Naive thymus-derived CD4-positive, alpha-beta T cell (primary cell): ENCODE measurements at regions of chr6 and their contacts with region 1.

Region 1: GRCh38 chr6:26122793-26123674 is 35.8 kb downstream of the HFE start:
- DNase-seq: peak; percentile 68 to 99 (median 96)
- ATAC-seq: peak; percentile 78
- H3K4me3 ChIP-seq: peak overlapping the region; percentile 94
- H3K4me3 Mint-ChIP-seq: peak overlapping the region; percentile 92 to 100 (median 98)
- H3K27ac ChIP-seq: peak overlapping the region; percentile 86
- H3K27ac Mint-ChIP-seq: peak overlapping the region; percentile 97 to 100 (median 99)
- H3K4me1 ChIP-seq: peaks cover 18 to 23% of the 10 kb centered on the region in 2 donors
- H3K4me1 Mint-ChIP-seq: peaks cover 22 to 54% (median 30%) of the 10 kb centered on the region in 7 donors
- H3K27me3 ChIP-seq: no peaks in the 10 kb centered on the region
- H3K27me3 Mint-ChIP-seq: peaks cover 0 to 21% (median 0%) of the 10 kb centered on the region in 5 donors

Region 2: GRCh38 chr6:26045065-26045927 is 77.7 kb before region 1 on chr6:
- CTCF ChIA-PET with region 1: interaction called, 5 read pairs
- POLR2A ChIA-PET with region 1: interaction called, 260 read pairs
- intact Hi-C with region 1: loop called (anchors 1 kb)
- DNase-seq: peak; percentile 39 to 93 (median 89)
- ATAC-seq: peak; percentile 68
- H3K4me3 ChIP-seq: peak overlapping the region; percentile 91
- H3K4me3 Mint-ChIP-seq: peak overlapping the region; percentile 87 to 98 (median 94)
- H3K27ac ChIP-seq: peak overlapping the region; percentile 90
- H3K27ac Mint-ChIP-seq: peak overlapping the region; percentile 80 to 98 (median 95)
- H3K4me1 ChIP-seq: peaks cover 7 to 19% of the 10 kb centered on the region in 2 donors
- H3K4me1 Mint-ChIP-seq: peaks cover 8 to 51% (median 20%) of the 10 kb centered on the region in 7 donors
- H3K27me3 ChIP-seq: no peaks in the 10 kb centered on the region
- H3K27me3 Mint-ChIP-seq: peaks cover 0 to 3% (median 0%) of the 10 kb centered on the region in 5 donors

Region 3: DNA sequence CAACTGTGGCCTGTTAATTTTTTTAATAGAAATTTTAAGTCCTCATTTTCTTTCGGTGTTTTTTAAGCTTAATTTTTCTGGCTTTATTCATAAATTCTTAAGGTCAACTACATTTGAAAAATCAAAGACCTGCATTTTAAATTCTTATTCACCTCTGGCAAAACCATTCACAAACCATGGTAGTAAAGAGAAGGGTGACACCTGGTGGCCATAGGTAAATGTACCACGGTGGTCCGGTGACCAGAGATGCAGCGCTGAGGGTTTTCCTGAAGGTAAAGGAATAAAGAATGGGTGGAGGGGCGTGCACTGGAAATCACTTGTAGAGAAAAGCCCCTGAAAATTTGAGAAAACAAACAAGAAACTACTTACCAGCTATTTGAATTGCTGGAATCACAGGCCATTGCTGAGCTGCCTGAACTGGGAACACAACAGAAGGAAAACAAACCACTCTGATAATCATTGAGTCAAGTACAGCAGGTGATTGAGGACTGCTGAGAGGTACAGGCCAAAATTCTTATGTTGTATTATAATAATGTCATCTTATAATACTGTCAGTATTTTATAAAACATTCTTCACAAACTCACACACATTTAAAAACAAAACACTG is 25.7 kb before region 1 on chr6:
- CTCF ChIA-PET with region 1: interaction called, 5 read pairs
- POLR2A ChIA-PET with region 1: interaction called, 324 read pairs
- intact Hi-C with region 1: no loop called
- DNase-seq: peak; percentile 23 to 75 (median 61)
- ATAC-seq: peak; percentile 92
- H3K4me3 ChIP-seq: no peak overlapping the region
- H3K4me3 Mint-ChIP-seq: no peak overlapping the region
- H3K27ac ChIP-seq: no peak overlapping the region
- H3K27ac Mint-ChIP-seq: no peak overlapping the region
- H3K4me1 ChIP-seq: no peaks in the 10 kb centered on the region
- H3K4me1 Mint-ChIP-seq: peaks cover 4 to 13% (median 8%) of the 10 kb centered on the region in 7 donors
- H3K27me3 ChIP-seq: no peaks in the 10 kb centered on the region
- H3K27me3 Mint-ChIP-seq: peaks cover 0 to 9% (median 0%) of the 10 kb centered on the region in 5 donors

Region 4: DNA sequence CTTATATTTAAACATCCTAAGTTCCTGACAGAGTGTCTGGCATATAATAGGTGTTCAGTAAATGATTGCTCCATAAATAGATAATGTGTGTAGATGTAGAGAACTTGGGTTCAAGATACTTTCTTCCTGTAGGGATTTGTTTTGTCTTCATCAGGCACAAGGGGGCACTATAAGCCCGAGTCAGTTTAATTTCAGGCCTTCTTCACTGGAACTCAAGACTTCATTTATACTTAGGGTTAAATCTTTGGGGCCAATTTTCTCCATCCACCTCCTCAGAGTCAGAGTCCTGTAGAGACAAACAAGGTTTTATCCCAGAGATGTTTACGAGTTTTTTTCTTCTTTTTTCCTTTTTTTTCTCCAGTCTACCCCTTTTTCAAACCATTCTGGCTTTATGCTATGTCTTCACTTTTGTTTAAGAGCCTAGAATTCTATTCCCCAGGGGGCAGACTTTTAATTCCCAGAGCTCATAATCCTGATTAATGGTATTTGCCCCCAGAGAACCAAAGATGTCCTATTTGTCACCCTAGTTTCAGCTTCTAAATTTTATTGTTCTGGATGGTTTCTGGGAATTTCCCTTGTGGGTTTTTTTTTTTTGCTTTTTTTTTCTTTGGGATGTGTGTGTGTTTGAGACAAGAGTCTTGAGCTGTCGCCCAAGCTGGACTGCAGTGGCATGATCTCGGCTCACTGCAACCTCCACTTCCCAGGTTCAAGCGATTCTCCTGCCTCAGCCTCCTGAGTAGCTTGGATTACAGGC is 52.6 kb after region 1 on chr6:
- CTCF ChIA-PET with region 1: interaction called, 3 read pairs
- POLR2A ChIA-PET with region 1: interaction called, 2,532 read pairs
- intact Hi-C with region 1: loop called (anchors 1 kb)
- DNase-seq: peak in 7 of 9 donors; percentile 57 to 75 (median 66)
- ATAC-seq: peak; percentile 32
- H3K4me3 ChIP-seq: no peak overlapping the region
- H3K4me3 Mint-ChIP-seq: peak overlapping the region in 7 of 10 donors; percentile 15 to 63 (median 43)
- H3K27ac ChIP-seq: no peak overlapping the region
- H3K27ac Mint-ChIP-seq: peak overlapping the region; percentile 32 to 89 (median 76)
- H3K4me1 ChIP-seq: peaks cover 16 to 19% of the 10 kb centered on the region in 2 donors
- H3K4me1 Mint-ChIP-seq: peaks cover 20 to 51% (median 39%) of the 10 kb centered on the region in 7 donors
- H3K27me3 ChIP-seq: no peaks in the 10 kb centered on the region
- H3K27me3 Mint-ChIP-seq: no peaks in the 10 kb centered on the region

Region 5: DNA sequence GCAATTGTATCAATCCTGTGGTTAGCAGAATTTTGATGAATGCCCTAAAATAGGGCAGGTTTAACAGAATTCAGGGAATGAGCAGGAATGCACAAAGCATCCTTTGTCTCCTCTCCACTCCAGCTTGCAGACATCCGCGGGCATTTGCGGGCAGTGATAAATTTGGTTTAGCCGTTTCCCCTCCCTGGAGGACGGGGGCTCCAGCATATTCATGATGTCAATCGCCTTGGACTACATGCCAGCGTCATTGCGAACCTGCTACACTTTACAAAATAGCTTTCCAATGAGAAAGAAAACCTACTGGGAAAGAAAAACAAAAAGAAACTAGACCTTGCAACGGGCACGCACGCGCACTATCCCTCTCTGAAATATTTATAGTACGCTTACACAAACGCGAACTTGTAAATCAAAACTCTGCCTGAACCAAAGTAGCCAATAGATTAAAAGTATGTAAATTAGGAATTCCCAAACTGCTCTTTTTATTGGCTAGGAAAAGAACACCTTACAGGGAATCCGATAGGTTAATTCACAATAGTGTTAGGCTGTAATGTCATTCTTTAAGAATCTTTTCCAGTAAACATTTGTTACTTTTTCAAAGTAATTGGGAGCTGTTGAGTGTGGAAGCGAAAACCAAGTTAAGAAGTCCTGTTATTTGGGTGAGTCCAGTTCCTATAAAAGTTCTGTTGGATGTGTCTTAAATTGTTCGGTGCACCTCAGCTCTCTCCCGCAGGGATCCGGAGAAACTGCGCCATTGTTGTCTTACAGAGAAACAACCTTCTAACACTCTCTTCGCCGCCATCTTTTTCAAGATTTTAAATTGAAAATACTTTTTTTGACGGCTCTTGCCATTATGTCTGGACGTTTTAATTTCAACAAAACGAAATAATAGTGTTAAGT is 100.9 kb after region 1 on chr6:
- CTCF ChIA-PET with region 1: no interaction called
- POLR2A ChIA-PET with region 1: interaction called, 215 read pairs
- intact Hi-C with region 1: no loop called
- DNase-seq: peak in 7 of 9 donors; percentile 79 to 89 (median 84)
- ATAC-seq: peak; percentile 93
- H3K4me3 ChIP-seq: peak overlapping the region; percentile 77
- H3K4me3 Mint-ChIP-seq: no peak overlapping the region
- H3K27ac ChIP-seq: peak overlapping the region; percentile 77
- H3K27ac Mint-ChIP-seq: no peak overlapping the region
- H3K4me1 ChIP-seq: peaks cover 14 to 18% of the 10 kb centered on the region in 2 donors
- H3K4me1 Mint-ChIP-seq: peaks cover 10 to 25% (median 18%) of the 10 kb centered on the region in 7 donors
- H3K27me3 ChIP-seq: no peaks in the 10 kb centered on the region
- H3K27me3 Mint-ChIP-seq: no peaks in the 10 kb centered on the region

Region 6: GRCh38 chr6:27370391-27370790 is 1247.4 kb after region 1 on chr6:
- CTCF ChIA-PET with region 1: no interaction called
- POLR2A ChIA-PET with region 1: no interaction called
- intact Hi-C with region 1: no loop called
- DNase-seq: no peak
- ATAC-seq: no peak
- H3K4me3 ChIP-seq: no peak overlapping the region
- H3K4me3 Mint-ChIP-seq: no peak overlapping the region
- H3K27ac ChIP-seq: no peak overlapping the region
- H3K27ac Mint-ChIP-seq: no peak overlapping the region
- H3K4me1 ChIP-seq: peaks cover 10% of the 10 kb centered on the region in 2 donors
- H3K4me1 Mint-ChIP-seq: peaks cover 12 to 41% (median 21%) of the 10 kb centered on the region in 7 donors
- H3K27me3 ChIP-seq: no peaks in the 10 kb centered on the region
- H3K27me3 Mint-ChIP-seq: peaks cover 0 to 6% (median 0%) of the 10 kb centered on the region in 5 donors

Region 7: DNA sequence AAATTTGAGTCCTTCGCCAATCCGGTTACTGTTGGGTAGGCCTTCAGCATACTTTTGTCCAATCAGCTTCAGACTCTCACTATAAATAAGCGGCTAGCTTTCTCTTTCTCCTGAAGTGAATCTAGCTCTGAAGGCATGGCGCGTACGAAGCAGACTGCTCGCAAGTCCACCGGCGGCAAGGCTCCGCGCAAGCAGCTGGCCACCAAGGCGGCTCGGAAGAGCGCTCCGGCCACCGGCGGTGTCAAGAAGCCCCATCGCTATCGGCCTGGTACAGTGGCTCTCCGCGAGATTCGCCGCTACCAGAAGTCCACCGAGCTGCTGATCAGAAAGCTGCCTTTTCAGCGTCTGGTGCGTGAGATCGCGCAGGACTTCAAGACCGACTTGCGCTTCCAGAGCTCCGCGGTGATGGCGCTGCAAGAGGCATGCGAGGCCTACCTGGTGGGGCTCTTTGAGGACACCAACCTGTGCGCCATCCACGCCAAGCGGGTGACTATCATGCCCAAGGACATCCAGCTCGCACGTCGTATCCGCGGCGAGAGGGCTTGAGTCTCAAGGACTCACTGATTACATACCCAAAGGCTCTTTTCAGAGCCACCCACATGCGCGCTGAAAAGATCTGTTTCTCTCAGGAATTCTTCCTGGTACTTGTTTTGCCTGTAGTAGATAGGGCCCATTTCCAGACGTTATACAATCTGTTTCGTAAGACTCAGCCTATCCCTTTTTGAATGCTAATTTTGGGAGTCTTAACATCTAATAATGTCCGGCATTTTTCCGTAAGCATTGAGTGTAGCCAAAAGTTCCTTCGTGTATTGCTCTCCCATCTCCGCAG is 1687.1 kb after region 1 on chr6:
- CTCF ChIA-PET with region 1: no interaction called
- POLR2A ChIA-PET with region 1: interaction called, 60 read pairs
- intact Hi-C with region 1: loop called (anchors 2 to 5 kb)
- DNase-seq: peak; percentile 66 to 96 (median 92)
- ATAC-seq: peak; percentile 71
- H3K4me3 ChIP-seq: peak overlapping the region; percentile 76
- H3K4me3 Mint-ChIP-seq: peak overlapping the region; percentile 81 to 97 (median 94)
- H3K27ac ChIP-seq: peak overlapping the region; percentile 86
- H3K27ac Mint-ChIP-seq: peak overlapping the region; percentile 95 to 99 (median 98)
- H3K4me1 ChIP-seq: peaks cover 20 to 42% of the 10 kb centered on the region in 2 donors
- H3K4me1 Mint-ChIP-seq: peaks cover 18 to 82% (median 61%) of the 10 kb centered on the region in 7 donors
- H3K27me3 ChIP-seq: no peaks in the 10 kb centered on the region
- H3K27me3 Mint-ChIP-seq: peaks cover 0 to 9% (median 0%) of the 10 kb centered on the region in 5 donors